ENCODE measurements at regions of chr2 and their contacts with region 1.

Region 1: GRCh38 chr2:85635636-85636035 is 19.6 kb downstream of the USP39 start:
- DNase-seq: no peak
- ATAC-seq: no peak
- H3K4me3 Mint-ChIP-seq: no peak overlapping the region
- H3K27ac Mint-ChIP-seq: no peak overlapping the region
- H3K4me1 Mint-ChIP-seq: peaks cover 5% of the 10 kb centered on the region
- H3K27me3 Mint-ChIP-seq: no peaks in the 10 kb centered on the region
- CTCF ChIP-seq: no peak

Region 2: GRCh38 chr2:85619617-85620016 is 16.0 kb before region 1 on chr2:
- CTCF ChIA-PET with region 1: interaction called, 26 read pairs
- POLR2A ChIA-PET with region 1: no interaction called
- intact Hi-C with region 1: no loop called
- DNase-seq: no peak
- ATAC-seq: no peak
- H3K4me3 Mint-ChIP-seq: no peak overlapping the region
- H3K27ac Mint-ChIP-seq: no peak overlapping the region
- H3K4me1 Mint-ChIP-seq: peaks cover 29% of the 10 kb centered on the region
- H3K27me3 Mint-ChIP-seq: no peaks in the 10 kb centered on the region
- CTCF ChIP-seq: no peak

Region 3: DNA sequence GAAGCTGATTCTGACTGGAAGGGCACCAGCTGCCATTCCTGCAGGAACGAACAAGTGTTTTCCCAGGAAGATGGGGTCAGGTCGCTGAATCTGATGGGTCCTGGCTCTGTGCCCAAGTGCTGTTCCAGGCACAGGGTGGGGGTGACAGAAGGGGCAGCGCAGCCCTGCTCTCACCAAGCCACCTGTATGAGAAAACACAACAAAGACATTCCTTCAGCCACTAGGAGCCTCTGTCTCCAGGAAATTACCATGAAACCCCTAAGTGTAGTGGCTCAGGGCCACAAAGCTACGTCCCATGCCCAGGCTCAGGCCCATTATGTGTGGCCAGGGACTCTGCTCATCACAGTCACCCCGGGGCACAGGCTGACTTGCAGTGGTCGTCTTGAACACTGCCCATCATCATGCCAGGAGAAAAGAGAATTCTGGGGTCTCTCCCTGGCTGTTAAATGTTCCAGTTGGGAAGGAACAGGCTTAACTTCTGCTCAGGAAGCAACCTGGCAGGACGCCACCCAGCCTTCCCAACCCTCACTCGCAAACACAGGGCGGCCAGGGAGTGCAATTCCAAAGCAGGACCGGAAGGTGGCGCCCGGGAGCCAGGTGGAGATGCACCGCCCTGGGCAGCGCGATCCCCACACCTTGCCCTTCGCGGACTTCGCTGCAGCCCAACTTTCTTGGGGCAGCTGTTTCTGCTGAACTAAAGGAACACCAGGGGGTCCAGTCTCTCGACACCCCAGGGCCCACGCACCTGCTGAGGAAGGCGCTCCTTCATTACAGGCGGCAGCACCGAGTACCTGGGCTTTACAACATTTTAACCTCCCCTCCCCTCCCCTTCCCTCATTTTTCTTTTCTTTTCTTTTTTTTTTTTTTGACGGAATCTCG is 43.4 kb after region 1 on chr2:
- CTCF ChIA-PET with region 1: interaction called, 7 read pairs
- POLR2A ChIA-PET with region 1: no interaction called
- intact Hi-C with region 1: loop called (anchors 5 kb)
- DNase-seq: peak; percentile 73
- ATAC-seq: peak; percentile 99
- H3K4me3 Mint-ChIP-seq: no peak overlapping the region
- H3K27ac Mint-ChIP-seq: no peak overlapping the region
- H3K4me1 Mint-ChIP-seq: no peaks in the 10 kb centered on the region
- H3K27me3 Mint-ChIP-seq: peaks cover 9% of the 10 kb centered on the region
- CTCF ChIP-seq: peak; percentile 41

Measured in activated B cell treated with CpG ODN at 0.5 μM for 24 hours (primary cell).